ENCODE measurements at regions of chr5 and their contacts with region 1.

Region 1: DNA sequence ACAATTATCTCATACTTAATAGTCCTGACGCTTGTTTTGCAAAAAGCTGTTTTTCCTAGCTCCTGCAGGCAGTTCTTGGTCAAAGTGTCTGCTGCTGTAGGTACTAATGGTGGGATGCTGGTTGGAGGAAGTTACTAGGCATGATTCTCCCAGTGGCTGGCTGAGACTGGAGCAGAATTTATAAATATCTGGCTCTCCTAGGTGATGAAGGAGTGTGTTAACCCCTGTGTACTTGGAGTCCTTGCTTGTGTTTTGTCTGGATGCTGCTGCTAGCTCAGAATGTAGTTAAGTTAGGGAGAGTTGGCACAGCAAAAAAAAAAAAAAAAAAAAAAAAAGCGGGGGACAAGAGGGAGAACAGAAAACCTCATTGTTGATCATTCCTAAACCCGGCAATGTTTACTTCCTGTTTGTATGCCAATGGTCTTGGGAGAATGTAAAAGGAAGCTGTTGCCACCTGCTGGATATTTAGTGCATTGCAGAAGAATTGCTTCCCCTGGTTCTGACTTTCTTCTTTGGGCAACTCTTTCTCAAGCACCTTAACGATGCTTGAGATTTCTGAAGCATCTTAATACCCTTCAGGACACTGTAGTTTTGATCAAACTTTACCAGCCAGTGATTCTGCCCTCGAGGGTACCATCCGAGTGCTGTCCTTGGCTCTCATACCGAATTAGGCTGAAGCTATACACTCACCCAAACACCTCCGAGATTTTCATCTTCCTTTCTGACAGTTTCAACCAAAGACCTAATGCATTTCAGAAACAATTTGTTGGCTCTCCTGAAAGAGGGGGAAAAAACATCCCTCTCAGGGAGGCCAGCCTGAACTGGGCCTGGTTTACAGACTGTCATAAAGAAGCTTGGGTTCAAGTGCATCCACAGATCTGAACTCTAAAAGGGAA is 71.7 kb upstream of the WWC1 start:
- DNase-seq: peak; percentile 80 to 94
- ATAC-seq: peak; percentile 77 to 89
- H3K4me3 ChIP-seq: peak overlapping the region; percentile 32; the same call in 2 of the 3 replicates
- H3K27ac ChIP-seq: peak overlapping the region; percentile 40 to 43; a peak in 2 of 6 replicates
- H3K4me1 ChIP-seq: 0 out of 3 replicates have a peak, but pooled peaks cover 3% of the 10 kb centered on the region
- CTCF ChIP-seq: peak; percentile 91
- EP300 ChIP-seq: no peak
- POLR2A ChIP-seq: no peak
- RAD21 ChIP-seq: peak; percentile 89 to 95

Region 2: DNA sequence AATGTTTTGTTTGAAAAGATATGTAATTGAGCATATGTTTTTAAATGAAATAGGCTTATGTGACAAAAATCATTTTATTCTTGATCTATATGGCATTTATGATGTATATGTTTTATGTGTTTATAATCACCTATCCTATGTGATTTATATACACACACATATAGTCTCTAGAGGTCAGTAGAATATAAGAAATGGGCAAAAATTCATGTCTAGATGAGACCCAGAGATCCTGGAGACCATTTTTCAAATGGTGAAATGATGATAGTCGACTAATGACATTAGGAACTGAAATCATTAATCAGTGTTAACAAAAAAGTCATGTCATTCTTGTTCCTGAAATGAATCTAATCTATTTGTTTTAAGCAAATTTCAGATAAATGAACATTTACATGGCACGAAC is 637.5 kb before region 1 on chr5:
- CTCF ChIA-PET with region 1: interaction called, 21 read pairs
- POLR2A ChIA-PET with region 1: no interaction called
- DNase-seq: peak; percentile 24 to 31
- ATAC-seq: peak; percentile 81 to 85; a peak in 4 of 6 replicates
- H3K4me3 ChIP-seq: no peak overlapping the region
- H3K27ac ChIP-seq: no peak overlapping the region
- H3K4me1 ChIP-seq: peaks cover 6% of the 10 kb centered on the region; the same call in 1 of the 3 replicates
- CTCF ChIP-seq: peak; percentile 71
- EP300 ChIP-seq: no peak
- POLR2A ChIP-seq: no peak
- RAD21 ChIP-seq: peak; percentile 82 to 88

Region 3: DNA sequence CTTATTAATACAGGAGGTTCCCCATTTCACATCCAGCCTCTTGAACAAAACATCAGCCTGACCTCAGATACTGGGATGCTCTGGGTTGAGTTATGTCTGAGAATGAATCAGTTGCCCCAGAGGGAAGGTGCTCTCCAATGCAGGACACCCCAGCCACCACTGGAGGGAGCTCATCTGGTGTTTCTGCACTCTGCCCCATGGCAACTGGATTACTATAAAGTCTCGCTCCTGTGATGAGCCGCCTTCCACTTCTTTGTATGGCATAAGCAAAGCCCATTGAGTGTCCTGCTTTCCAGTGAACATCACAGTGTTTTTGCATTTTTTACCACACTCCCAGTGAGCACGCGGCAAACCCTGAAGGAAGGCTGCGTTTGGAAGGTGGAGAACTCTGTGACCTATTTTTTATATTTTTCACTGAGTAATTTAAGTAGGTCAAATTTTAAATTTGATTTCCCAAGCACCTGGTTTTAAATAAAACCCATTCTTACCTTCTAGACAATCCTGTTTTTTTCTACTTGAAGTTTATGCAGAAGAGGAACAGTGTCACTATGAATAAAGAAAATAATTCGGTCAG is 105.2 kb before region 1 on chr5:
- CTCF ChIA-PET with region 1: interaction called, 21 read pairs
- POLR2A ChIA-PET with region 1: no interaction called
- DNase-seq: peak; percentile 69 to 70
- ATAC-seq: peak; percentile 92 to 97
- H3K4me3 ChIP-seq: no peak overlapping the region
- H3K27ac ChIP-seq: no peak overlapping the region
- H3K4me1 ChIP-seq: no peaks in the 10 kb centered on the region
- CTCF ChIP-seq: peak; percentile 67
- EP300 ChIP-seq: no peak
- POLR2A ChIP-seq: no peak
- RAD21 ChIP-seq: peak; percentile 47 to 63; a peak in 4 of 5 replicates

Region 4: GRCh38 chr5:168204165-168204564 is 15.6 kb before region 1 on chr5:
- CTCF ChIA-PET with region 1: interaction called, 15 read pairs
- POLR2A ChIA-PET with region 1: no interaction called
- DNase-seq: no peak
- ATAC-seq: no peak
- H3K4me3 ChIP-seq: no peak overlapping the region
- H3K27ac ChIP-seq: no peak overlapping the region
- H3K4me1 ChIP-seq: no peaks in the 10 kb centered on the region
- CTCF ChIP-seq: no peak
- EP300 ChIP-seq: no peak
- POLR2A ChIP-seq: no peak
- RAD21 ChIP-seq: no peak

Region 5: DNA sequence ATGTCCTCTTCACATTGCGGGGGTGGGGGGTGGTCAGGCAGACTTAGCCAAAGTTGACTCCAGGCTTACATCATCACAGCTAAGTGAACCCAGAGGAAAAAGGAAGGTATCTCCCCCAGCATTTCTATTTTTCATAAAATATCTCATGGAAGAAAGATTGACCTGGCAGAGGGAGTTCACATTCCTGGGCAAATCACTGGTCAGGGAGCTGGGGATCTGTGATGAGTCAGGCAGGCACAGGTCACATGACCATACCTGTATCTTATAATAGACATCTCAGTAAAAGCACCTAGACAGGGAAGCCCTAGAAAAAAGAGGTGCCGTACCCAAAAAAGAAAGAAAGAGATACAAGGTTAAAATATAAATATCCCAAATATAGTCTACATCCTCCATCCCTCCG is 14.4 kb after region 1 on chr5:
- CTCF ChIA-PET with region 1: interaction called, 16 read pairs
- POLR2A ChIA-PET with region 1: no interaction called
- DNase-seq: no peak
- ATAC-seq: no peak
- H3K4me3 ChIP-seq: no peak overlapping the region
- H3K27ac ChIP-seq: no peak overlapping the region
- H3K4me1 ChIP-seq: no peaks in the 10 kb centered on the region
- CTCF ChIP-seq: no peak
- EP300 ChIP-seq: no peak
- POLR2A ChIP-seq: no peak
- RAD21 ChIP-seq: no peak

Region 6: DNA sequence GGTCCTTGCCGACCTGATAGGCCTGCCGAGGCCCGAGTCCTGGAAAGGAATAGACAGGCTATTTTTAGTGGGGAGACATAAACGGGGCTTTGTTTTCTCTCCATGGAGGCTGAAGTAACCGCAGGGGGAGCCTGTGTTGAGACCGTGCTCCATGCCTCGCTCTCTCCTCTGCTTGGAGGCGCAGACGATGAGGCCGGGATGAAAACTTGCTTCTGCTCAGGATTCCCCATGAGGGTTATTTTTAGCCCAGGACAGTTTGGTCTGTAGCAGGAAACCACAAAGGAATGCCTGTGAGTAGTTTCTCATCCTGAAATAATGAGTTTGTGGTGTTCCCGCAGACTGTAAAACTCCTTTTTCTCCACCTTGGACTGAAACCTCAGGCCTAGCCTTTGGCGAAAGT is 184.6 kb after region 1 on chr5:
- CTCF ChIA-PET with region 1: no interaction called
- POLR2A ChIA-PET with region 1: no interaction called
- DNase-seq: no peak
- ATAC-seq: no peak
- H3K4me3 ChIP-seq: no peak overlapping the region
- H3K27ac ChIP-seq: no peak overlapping the region
- H3K4me1 ChIP-seq: peaks cover 9% of the 10 kb centered on the region
- CTCF ChIP-seq: no peak
- EP300 ChIP-seq: no peak
- POLR2A ChIP-seq: no peak
- RAD21 ChIP-seq: no peak

Measured in A549 (cell line).